Heart right ventricle (tissue), 16 donors: ENCODE measurements at regions of chr12 and their contacts with region 1.

Region 1: GRCh38 chr12:62631471-62632410 is 165.1 kb downstream of the MON2 start:
- DNase-seq: peak; percentile 60 to 66
- ATAC-seq: peak; percentile 84 to 92 (median 88)
- H3K4me3 ChIP-seq: peak overlapping the region; percentile 46 to 70 (median 63)
- H3K27ac ChIP-seq: peak overlapping the region in 9 of 10 donors; percentile 54 to 83 (median 66)
- H3K4me1 ChIP-seq: peaks cover 0 to 20% (median 15%) of the 10 kb centered on the region in 9 donors
- H3K27me3 ChIP-seq: peaks cover 0 to 50% (median 0%) of the 10 kb centered on the region in 7 donors
- CTCF ChIP-seq: peak in 7 of 9 donors; percentile 22 to 64 (median 41)

Region 2: GRCh38 chr12:62446754-62447452 is 184.8 kb before region 1 on chr12:
- intact Hi-C with region 1: no loop called
- DNase-seq: no peak
- ATAC-seq: no peak
- H3K4me3 ChIP-seq: no peak overlapping the region
- H3K27ac ChIP-seq: no peak overlapping the region
- H3K4me1 ChIP-seq: no peaks in the 10 kb centered on the region
- H3K27me3 ChIP-seq: no peaks in the 10 kb centered on the region
- CTCF ChIP-seq: no peak

Region 3: GRCh38 chr12:62575036-62575435 is 56.7 kb before region 1 on chr12:
- intact Hi-C with region 1: no loop called
- DNase-seq: no peak
- ATAC-seq: no peak
- H3K4me3 ChIP-seq: no peak overlapping the region
- H3K27ac ChIP-seq: no peak overlapping the region
- H3K4me1 ChIP-seq: no peaks in the 10 kb centered on the region
- H3K27me3 ChIP-seq: no peaks in the 10 kb centered on the region
- CTCF ChIP-seq: no peak

Region 4: GRCh38 chr12:62603061-62603810 is 28.5 kb before region 1 on chr12:
- intact Hi-C with region 1: loop called in 2 of 10 experiments (anchors 5 kb)
- DNase-seq: peak; percentile 86 to 87
- ATAC-seq: peak; percentile 90 to 98 (median 93)
- H3K4me3 ChIP-seq: peak overlapping the region; percentile 55 to 97 (median 80)
- H3K27ac ChIP-seq: peak overlapping the region; percentile 99 to 100 (median 100)
- H3K4me1 ChIP-seq: peaks cover 0 to 45% (median 20%) of the 10 kb centered on the region in 9 donors
- H3K27me3 ChIP-seq: no peaks in the 10 kb centered on the region
- CTCF ChIP-seq: peak; percentile 29 to 79 (median 52)

Region 5: GRCh38 chr12:62714774-62715721 is 83.3 kb after region 1 on chr12:
- intact Hi-C with region 1: loop called in 1 of 10 experiments (anchors 5 kb)
- DNase-seq: peak; percentile 49 to 62
- ATAC-seq: peak; percentile 57 to 75 (median 67)
- H3K4me3 ChIP-seq: no peak overlapping the region
- H3K27ac ChIP-seq: peak overlapping the region in 7 of 10 donors; percentile 52 to 82 (median 58)
- H3K4me1 ChIP-seq: peaks cover 0 to 50% (median 22%) of the 10 kb centered on the region in 9 donors
- H3K27me3 ChIP-seq: no peaks in the 10 kb centered on the region
- CTCF ChIP-seq: no peak